Panc1 (cell line): ENCODE measurements at regions of chrX and their contacts with region 1.

Region 1: DNA sequence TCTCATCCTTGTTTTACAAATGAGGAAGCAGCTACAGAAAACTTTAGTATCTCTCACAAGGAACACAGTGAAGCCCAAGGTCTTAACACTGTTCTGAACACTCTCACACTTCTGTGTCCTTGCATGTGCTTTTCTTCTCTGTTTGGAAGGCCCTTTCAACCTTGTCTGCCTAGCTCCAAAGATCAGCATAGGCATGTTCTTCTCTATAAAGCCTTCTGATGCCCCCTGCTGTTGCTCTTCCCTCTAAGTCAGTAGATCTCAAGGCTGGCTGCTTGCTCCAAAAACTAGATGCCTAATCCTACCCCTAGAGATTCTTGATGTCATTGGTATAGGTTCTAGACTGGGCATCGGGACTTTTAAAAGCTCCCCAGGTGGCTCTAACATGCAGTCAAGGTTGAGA is 5.9 kb downstream of the APOO start:
- DNase-seq: no peak
- ATAC-seq: peak; percentile 86
- H3K4me3 ChIP-seq: no peak overlapping the region
- H3K27ac ChIP-seq: peak overlapping the region; percentile 89
- H3K4me1 ChIP-seq: peaks cover 21% of the 10 kb centered on the region
- H3K27me3 ChIP-seq: no peaks in the 10 kb centered on the region
- CTCF ChIP-seq: peak; percentile 69

Region 2: GRCh38 chrX:23263892-23264291 is 637.9 kb before region 1 on chrX:
- CTCF ChIA-PET with region 1: no interaction called
- POLR2A ChIA-PET with region 1: no interaction called
- in situ Hi-C with region 1: no loop called
- intact Hi-C with region 1: no loop called
- DNase-seq: no peak
- ATAC-seq: no peak
- H3K4me3 ChIP-seq: no peak overlapping the region
- H3K27ac ChIP-seq: no peak overlapping the region
- H3K4me1 ChIP-seq: no peaks in the 10 kb centered on the region
- H3K27me3 ChIP-seq: no peaks in the 10 kb centered on the region
- CTCF ChIP-seq: no peak

Region 3: GRCh38 chrX:23694606-23695005 is 207.2 kb before region 1 on chrX:
- CTCF ChIA-PET with region 1: interaction called, 3 read pairs
- POLR2A ChIA-PET with region 1: interaction called, 18 read pairs
- in situ Hi-C with region 1: no loop called
- intact Hi-C with region 1: loop called (anchors 2 kb)
- DNase-seq: peak; percentile 2
- ATAC-seq: peak; percentile 78
- H3K4me3 ChIP-seq: no peak overlapping the region
- H3K27ac ChIP-seq: no peak overlapping the region
- H3K4me1 ChIP-seq: no peaks in the 10 kb centered on the region
- H3K27me3 ChIP-seq: no peaks in the 10 kb centered on the region
- CTCF ChIP-seq: peak; percentile 66